Activated CD4-positive, alpha-beta T cell treated with anti-CD3 and anti-CD28 coated beads for 36 hours (primary cell): ENCODE measurements at regions of chr3 and their contacts with region 1.

Region 1: DNA sequence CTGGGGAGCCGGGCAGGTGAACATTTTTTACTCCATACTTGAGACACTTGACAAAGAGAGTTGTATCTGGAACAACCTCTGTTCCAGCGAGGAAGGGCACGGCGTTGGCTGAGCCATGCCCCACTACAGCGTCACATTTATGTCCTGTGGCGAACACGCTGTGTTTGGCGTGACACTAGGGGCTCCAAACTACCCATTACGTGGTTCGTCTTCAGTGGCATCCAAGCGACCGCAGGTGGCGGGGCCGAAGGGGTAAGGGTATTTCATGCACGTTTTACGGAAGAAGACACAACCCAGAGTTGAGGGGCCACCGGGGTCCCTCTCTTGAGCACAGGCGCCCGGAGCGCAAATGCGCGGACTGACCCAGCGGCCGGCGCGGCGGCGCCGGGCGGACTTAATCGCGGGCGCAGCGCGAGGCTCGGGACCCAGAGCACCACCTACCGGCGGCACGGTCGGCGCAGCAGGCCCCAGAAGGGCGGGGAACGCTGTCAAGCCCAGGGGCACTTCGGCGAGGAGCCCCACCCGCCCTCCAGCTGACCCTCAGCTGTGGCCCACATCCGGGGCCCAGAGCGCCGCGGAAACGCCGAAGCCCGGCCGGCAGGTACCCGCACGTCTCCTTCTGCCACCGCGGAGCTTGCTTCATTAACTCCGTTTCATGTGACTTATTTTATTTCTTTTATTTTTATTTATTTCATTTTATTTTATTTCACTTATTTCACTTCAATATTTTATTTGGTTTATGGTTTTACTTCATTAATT is 36.4 kb upstream of the TRIM71 start:
- DNase-seq: peak; percentile 84
- ATAC-seq: peak; percentile 86
- H3K4me3 Mint-ChIP-seq: peak overlapping the region; percentile 79
- H3K27ac Mint-ChIP-seq: no peak overlapping the region
- H3K4me1 Mint-ChIP-seq: peaks cover 10% of the 10 kb centered on the region
- H3K27me3 Mint-ChIP-seq: peaks cover 12% of the 10 kb centered on the region

Region 2: DNA sequence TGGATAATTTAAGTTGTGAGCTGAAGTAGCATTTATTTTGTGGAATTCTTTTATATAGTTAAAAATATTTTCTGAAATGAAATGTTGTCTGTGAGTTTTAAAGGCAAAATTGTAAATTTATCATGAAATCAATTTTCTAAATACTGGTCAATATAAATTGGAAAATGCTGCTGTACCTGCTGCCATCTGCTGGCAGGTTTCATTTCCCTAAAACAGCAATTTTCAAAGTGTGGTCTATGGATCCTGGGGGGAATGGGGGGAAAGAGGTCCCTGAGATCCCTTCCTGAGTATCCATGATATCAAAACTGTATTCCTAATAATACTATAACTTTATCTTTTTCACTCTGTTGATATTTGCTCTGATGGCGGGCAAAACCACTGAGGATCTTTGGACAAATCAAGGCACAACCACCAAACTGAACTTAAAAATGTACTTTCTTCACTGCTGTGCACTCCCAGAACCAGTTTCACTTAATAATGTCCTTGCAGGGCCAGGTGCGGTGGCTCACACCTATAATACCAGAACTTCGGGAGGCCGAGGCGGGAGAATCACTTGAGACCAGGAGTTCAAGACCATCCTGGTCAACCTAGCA is 152.9 kb after region 1 on chr3:
- CTCF ChIA-PET with region 1: interaction called, 3 read pairs
- POLR2A ChIA-PET with region 1: no interaction called
- intact Hi-C with region 1: loop called in 1 of 2 experiments (anchors 5 kb)
- DNase-seq: peak; percentile 48
- ATAC-seq: no peak
- H3K4me3 Mint-ChIP-seq: no peak overlapping the region
- H3K27ac Mint-ChIP-seq: no peak overlapping the region
- H3K4me1 Mint-ChIP-seq: no peaks in the 10 kb centered on the region
- H3K27me3 Mint-ChIP-seq: no peaks in the 10 kb centered on the region

Region 3: GRCh38 chr3:33144433-33144832 is 363.0 kb after region 1 on chr3:
- CTCF ChIA-PET with region 1: no interaction called
- POLR2A ChIA-PET with region 1: no interaction called
- intact Hi-C with region 1: no loop called
- DNase-seq: peak; percentile 63
- ATAC-seq: peak; percentile 66
- H3K4me3 Mint-ChIP-seq: no peak overlapping the region
- H3K27ac Mint-ChIP-seq: no peak overlapping the region
- H3K4me1 Mint-ChIP-seq: no peaks in the 10 kb centered on the region
- H3K27me3 Mint-ChIP-seq: no peaks in the 10 kb centered on the region